ENCODE measurements at regions of chr18 and their contacts with region 1.

Region 1: GRCh38 chr18:50287441-50288347 is at the start of gene CXXC1:
- DNase-seq: peak; percentile 95
- ATAC-seq: peak; percentile 98
- H3K4me3 ChIP-seq: peak within 1 kb of the TSS; percentile 73 to 97 (median 84)
- H3K27ac ChIP-seq: peak within 1 kb of the TSS; percentile 82 to 93 (median 91)
- H3K4me1 ChIP-seq: no peaks in the 10 kb centered on the region
- H3K27me3 ChIP-seq: no peaks in the 10 kb centered on the region
- CTCF ChIP-seq: peak; percentile 46 to 75 (median 61)
- POLR2A ChIP-seq: peak in 1 of 2 donors; percentile 46
- total RNA-seq, gene CXXC1: 21.1 to 32.0 (median 27.3) TPM

Region 2: GRCh38 chr18:49813319-49814146 is 474.2 kb before region 1 on chr18 and contains the start of gene ACAA2:
- in situ Hi-C with region 1: loop called in 2 of 4 experiments (anchors 25 kb)
- intact Hi-C with region 1: loop called (anchors 10 kb)
- DNase-seq: peak; percentile 78 to 82
- ATAC-seq: peak; percentile 90 to 91
- H3K4me3 ChIP-seq: peak within 1 kb of the TSS; percentile 88 to 95 (median 92)
- H3K27ac ChIP-seq: peak within 1 kb of the TSS; percentile 93 to 99 (median 96)
- H3K4me1 ChIP-seq: peaks cover 14 to 20% of the 10 kb centered on the region in 2 donors
- H3K27me3 ChIP-seq: no peaks in the 10 kb centered on the region
- CTCF ChIP-seq: no peak
- POLR2A ChIP-seq: peak; percentile 38 to 65
- total RNA-seq, gene ACAA2: 73.7 to 95.7 (median 79.6) TPM

Region 3: GRCh38 chr18:50307738-50308470 is 20.2 kb after region 1 on chr18:
- in situ Hi-C with region 1: no loop called
- intact Hi-C with region 1: loop called (anchors 1 kb)
- DNase-seq: peak; percentile 70 to 82
- ATAC-seq: peak; percentile 97 to 99
- H3K4me3 ChIP-seq: peak overlapping the region; percentile 41 to 58 (median 53)
- H3K27ac ChIP-seq: peak overlapping the region in 2 of 4 donors; percentile 21 to 62
- H3K4me1 ChIP-seq: peaks cover 3 to 6% of the 10 kb centered on the region in 2 donors
- H3K27me3 ChIP-seq: peaks cover 0 to 23% (median 2%) of the 10 kb centered on the region in 3 donors
- CTCF ChIP-seq: no peak
- POLR2A ChIP-seq: no peak

Region 4: DNA sequence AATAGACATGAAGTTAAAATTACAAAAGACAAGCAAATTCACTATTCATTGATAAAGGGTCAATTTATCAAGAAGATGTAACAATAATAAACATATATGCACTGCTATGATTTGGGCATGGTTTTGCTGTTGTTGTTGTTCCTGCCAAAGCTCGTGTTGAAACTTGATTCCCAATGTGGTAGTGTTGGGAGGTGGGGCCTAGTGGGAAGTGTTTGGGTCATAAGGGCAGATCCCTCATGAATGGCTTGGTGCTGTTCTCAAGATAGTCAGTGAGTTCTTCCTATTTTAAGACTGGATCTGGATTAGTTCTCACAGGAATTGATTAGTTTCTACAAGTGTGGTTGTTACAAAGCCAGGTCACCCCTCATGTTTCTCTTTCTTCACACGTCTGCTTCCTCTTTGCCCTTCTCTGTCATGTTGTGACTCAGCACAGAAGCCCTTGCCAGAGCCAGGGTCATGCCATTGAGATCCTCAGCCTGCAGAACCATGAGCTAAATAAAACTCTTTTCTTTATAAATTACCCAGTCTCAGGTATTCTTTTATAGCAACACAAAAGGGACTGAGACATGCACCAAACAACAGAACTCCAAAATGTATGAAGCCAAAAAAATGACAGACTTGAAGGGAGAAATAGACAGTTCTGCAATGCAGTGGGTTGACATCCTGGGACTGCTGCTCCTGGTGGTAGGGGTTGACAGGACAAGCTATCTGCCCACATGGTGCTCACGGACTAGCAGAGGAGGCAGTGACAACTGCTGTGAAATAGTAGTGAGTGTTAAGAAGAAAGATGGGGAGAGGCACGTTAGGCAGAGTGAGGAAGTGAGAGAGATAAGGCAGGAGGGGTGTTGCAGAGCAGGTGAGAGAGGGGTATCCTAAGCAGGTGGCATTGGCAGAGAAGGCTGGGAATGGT is 68.6 kb after region 1 on chr18:
- in situ Hi-C with region 1: no loop called
- intact Hi-C with region 1: loop called (anchors 5 kb)
- DNase-seq: no peak
- ATAC-seq: no peak
- H3K4me3 ChIP-seq: no peak overlapping the region
- H3K27ac ChIP-seq: no peak overlapping the region
- H3K4me1 ChIP-seq: peaks cover 0 to 4% of the 10 kb centered on the region in 2 donors
- H3K27me3 ChIP-seq: no peaks in the 10 kb centered on the region
- CTCF ChIP-seq: no peak
- POLR2A ChIP-seq: no peak

Region 5: DNA sequence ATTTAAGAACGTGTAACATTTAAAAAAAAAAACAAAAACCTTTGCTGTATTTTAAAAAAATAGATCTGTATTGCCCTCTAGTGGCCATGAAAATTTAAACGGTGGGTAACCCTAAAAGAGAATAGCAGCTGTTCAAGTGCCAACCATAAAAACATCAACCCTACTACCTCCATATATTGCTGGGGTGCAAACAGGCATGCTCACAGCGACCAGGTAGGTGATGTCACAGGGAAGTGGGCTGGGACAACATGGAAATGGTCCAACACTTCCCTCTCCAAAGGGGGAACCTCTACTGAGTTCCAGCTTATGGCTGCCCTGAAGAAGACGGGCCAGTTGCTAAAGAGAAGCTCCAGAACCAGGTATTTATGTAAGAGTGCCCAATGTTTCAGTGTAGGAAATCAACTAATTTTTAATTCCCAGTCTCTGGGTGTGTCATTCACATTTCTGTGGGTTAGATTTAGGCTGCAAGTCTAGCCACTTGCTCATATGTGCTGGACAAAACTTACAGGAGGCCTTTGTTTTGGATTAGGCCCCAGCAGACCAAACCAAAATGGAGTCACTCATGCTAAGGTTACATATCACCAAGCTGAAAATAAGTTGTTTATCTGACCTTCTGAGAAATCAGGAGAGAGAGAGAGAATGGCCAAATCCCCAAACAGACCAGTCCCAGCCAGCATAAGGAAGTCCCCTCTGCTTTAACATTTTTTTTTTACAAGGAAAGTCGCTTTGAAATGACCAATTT is 141.7 kb after region 1 on chr18:
- in situ Hi-C with region 1: no loop called
- intact Hi-C with region 1: loop called (anchors 5 kb)
- DNase-seq: no peak
- ATAC-seq: no peak
- H3K4me3 ChIP-seq: no peak overlapping the region
- H3K27ac ChIP-seq: no peak overlapping the region
- H3K4me1 ChIP-seq: no peaks in the 10 kb centered on the region
- H3K27me3 ChIP-seq: no peaks in the 10 kb centered on the region
- CTCF ChIP-seq: peak in 3 of 5 experiments; percentile 15 to 55 (median 33)
- POLR2A ChIP-seq: no peak

Region 6: DNA sequence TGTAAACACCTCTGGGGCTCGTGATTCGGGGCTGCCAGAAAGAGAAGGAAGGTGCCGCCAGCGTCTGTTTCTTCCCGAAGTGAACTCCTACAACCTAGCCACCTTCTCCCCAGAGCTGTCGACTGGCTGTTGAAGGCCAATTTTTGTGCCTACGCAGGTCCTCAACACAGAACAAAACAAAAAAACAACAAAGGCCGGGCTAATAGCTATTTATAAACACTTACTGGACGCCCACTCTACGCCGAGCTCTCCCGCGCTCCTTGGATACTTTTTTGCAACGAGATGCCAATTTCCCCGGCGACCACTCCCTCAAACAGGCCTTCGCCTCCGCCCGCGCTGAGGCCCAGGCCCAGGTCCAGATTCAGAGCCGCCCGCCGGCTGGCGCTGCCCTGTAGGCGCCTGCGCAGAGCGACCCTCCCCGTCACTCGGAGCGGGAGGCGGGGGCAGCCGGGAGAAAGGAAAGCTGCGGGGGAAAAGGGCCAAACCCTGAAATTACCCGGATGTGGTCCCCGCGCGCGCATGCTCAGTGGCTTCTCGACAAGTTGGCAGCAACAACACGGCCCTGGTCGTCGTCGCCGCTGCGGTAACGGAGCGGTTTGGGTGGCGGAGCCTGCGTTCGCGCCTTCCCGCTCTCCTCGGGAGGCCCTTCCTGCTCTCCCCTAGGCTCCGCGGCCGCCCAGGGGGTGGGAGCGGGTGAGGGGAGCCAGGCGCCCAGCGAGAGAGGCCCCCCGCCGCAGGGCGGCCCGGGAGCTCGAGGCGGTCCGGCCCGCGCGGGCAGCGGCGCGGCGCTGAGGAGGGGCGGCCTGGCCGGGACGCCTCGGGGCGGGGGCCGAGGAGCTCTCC is 742.2 kb after region 1 on chr18 and contains the start of gene SMAD4:
- in situ Hi-C with region 1: loop called in 2 of 4 experiments (anchors 25 kb)
- intact Hi-C with region 1: loop called (anchors 5 kb)
- DNase-seq: peak; percentile 93 to 95
- ATAC-seq: peak; percentile 90 to 94
- H3K4me3 ChIP-seq: peak within 1 kb of the TSS; percentile 62 to 67 (median 64)
- H3K27ac ChIP-seq: peak within 1 kb of the TSS; percentile 90 to 97 (median 92)
- H3K4me1 ChIP-seq: peaks cover 46 to 57% of the 10 kb centered on the region in 2 donors
- H3K27me3 ChIP-seq: no peaks in the 10 kb centered on the region
- CTCF ChIP-seq: no peak
- POLR2A ChIP-seq: peak; percentile 93 to 96
- total RNA-seq, gene SMAD4: 148 to 210 (median 168) TPM

Measured in gastrocnemius medialis (tissue), 4 donors.